ENCODE measurements at regions of chr9 and their contacts with region 1.

Region 1: DNA sequence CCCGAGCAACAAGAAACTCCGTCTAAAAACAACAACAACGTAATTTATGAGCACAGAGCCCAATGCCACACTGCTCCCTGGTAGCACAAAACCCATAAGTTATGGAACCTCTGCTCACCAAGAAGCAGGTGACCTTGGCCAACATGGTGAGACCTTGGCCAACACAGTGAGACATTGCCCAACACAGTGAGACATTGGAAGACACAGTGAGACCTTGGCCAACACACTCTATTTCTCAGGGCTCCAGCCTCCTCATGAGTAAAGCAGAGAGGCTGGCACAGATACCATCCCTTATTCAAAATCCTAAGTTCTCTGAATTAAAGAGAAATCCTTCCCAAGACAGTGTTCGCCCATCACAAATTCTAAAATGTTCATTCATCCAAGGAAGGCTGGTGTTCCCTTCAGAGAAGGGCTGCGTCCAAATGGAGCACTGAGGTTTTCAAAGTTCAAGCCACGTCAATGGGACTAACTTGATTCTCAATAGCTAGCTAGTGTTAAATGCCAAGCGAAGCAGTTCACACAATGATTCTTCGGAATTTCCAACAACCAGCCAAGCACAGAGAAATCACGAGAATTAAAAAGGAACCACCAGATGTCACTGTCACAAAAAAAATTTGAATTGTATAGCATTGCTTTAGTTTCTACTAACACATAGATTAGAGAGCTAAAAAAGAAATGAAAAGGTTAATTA is 29.5 kb downstream of the TTC39B start:
- DNase-seq: no peak
- H3K4me3 ChIP-seq: no peak overlapping the region
- H3K27ac ChIP-seq: peak overlapping the region; percentile 23 to 72 (median 58)
- H3K4me1 ChIP-seq: peaks cover 0 to 37% (median 23%) of the 10 kb centered on the region in 4 donors
- H3K27me3 ChIP-seq: no peaks in the 10 kb centered on the region
- CTCF ChIP-seq: peak; percentile 12 to 45 (median 25)
- EP300 ChIP-seq: no peak
- POLR2A ChIP-seq: no peak

Region 2: GRCh38 chr9:15211160-15211814 is 66.3 kb before region 1 on chr9:
- in situ Hi-C with region 1: no loop called
- intact Hi-C with region 1: no loop called
- DNase-seq: peak; percentile 59
- H3K4me3 ChIP-seq: no peak overlapping the region
- H3K27ac ChIP-seq: peak overlapping the region in 2 of 4 donors; percentile 11 to 37
- H3K4me1 ChIP-seq: peaks cover 0 to 25% (median 6%) of the 10 kb centered on the region in 4 donors
- H3K27me3 ChIP-seq: no peaks in the 10 kb centered on the region
- CTCF ChIP-seq: peak; percentile 82 to 90 (median 88)
- EP300 ChIP-seq: peak; percentile 70
- POLR2A ChIP-seq: no peak

Region 3: GRCh38 chr9:15422372-15423230 is 145.1 kb after region 1 on chr9 and contains the start of gene SNAPC3:
- in situ Hi-C with region 1: loop called in 1 of 4 experiments (anchors 25 kb)
- intact Hi-C with region 1: no loop called
- DNase-seq: peak; percentile 97
- H3K4me3 ChIP-seq: peak within 1 kb of the TSS; percentile 72 to 94 (median 88)
- H3K27ac ChIP-seq: peak within 1 kb of the TSS; percentile 88 to 94 (median 91)
- H3K4me1 ChIP-seq: peaks cover 18 to 50% (median 38%) of the 10 kb centered on the region in 4 donors
- H3K27me3 ChIP-seq: no peaks in the 10 kb centered on the region
- CTCF ChIP-seq: peak in 2 of 5 experiments; percentile 49 to 50
- EP300 ChIP-seq: peak; percentile 87
- POLR2A ChIP-seq: peak; percentile 89
- total RNA-seq, gene SNAPC3: 44.9 to 70.7 (median 52.5) TPM

Measured in transverse colon (tissue), 4 donors.